Dendritic cell treated with granulocyte-macrophage colony-stimulating factor and Interleukin-4, amounts not matched to agents 40 ng/mL and 50 ng/mL, for 4 days (primary cell): ENCODE measurements at regions of chr3 and their contacts with region 1.

Region 1: DNA sequence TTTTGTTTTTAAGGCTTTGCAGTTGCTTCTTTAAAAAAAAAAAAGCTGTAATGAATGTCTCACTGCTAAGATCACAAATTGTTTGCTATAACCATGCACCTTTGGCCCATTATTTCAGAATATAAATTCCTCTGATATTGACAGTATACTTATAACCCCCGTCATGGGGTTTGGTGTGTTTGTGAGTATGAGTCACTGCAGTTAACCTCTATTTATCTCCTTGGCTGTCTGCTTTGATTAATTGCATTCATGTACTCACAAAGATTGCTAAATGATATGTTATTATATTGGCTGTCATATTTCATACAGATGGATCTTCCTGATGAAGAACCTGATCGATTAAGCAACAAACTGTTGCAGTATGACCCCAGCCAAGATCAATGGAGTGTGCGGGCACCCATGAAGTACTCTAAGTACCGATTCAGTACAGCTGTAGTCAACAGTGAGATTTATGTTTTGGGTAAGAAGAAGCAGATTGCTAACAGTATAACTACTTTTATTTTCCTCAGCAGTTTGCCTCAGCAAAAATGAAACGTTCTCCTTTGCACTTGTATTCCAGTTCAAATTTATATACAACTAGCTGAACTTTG is 14.9 kb downstream of the KBTBD12 start:
- H3K4me3 Mint-ChIP-seq: no peak overlapping the region
- H3K27ac Mint-ChIP-seq: no peak overlapping the region
- H3K4me1 Mint-ChIP-seq: peaks cover 13% of the 10 kb centered on the region
- H3K27me3 Mint-ChIP-seq: peaks cover 9% of the 10 kb centered on the region

Region 2: GRCh38 chr3:127857333-127857732 is 72.6 kb before region 1 on chr3:
- intact Hi-C with region 1: no loop called
- H3K4me3 Mint-ChIP-seq: no peak overlapping the region
- H3K27ac Mint-ChIP-seq: no peak overlapping the region
- H3K4me1 Mint-ChIP-seq: peaks cover 5% of the 10 kb centered on the region
- H3K27me3 Mint-ChIP-seq: peaks cover 11% of the 10 kb centered on the region

Region 3: GRCh38 chr3:127889461-127889863 is 40.5 kb before region 1 on chr3:
- intact Hi-C with region 1: loop called (anchors 10 kb)
- H3K4me3 Mint-ChIP-seq: no peak overlapping the region
- H3K27ac Mint-ChIP-seq: no peak overlapping the region
- H3K4me1 Mint-ChIP-seq: peaks cover 17% of the 10 kb centered on the region
- H3K27me3 Mint-ChIP-seq: peaks cover 7% of the 10 kb centered on the region